ENCODE measurements at regions of chr19 and their contacts with region 1.

Region 1: DNA sequence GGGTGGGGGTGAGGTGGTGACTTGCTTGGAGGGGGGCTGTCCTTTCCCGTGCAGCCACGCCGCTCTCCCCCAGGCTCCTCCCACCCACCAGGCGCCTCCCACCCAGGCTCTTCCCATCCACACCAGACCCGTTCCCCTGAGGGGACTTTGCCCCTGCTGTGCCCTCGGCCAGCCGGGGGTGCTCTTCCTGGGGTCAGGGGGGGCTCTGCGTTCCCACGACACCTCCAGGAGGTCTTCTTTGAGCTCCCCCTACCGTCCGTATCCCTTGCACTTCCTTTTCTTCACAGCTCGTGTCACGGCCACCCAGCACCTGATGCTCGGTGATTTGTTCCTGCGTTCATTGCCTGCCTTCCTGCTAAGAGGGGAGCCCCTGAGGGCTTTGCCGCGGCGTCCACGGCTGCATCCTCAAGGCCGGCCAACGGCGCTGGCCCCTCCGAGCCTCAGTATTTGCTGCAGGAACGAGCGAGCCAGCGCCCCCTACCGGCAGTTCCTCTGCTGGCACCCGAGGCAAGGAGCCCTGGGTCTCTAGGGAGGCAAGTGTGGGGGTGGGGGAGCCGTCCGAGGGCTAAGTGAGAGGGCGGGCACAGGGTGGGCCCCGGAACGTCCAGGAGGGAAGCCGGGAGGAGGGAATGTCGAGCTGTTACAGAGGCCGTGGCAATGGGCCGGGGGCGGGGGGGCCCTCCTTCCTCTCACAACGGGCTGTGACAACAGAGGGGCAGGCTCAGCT is 11.8 kb downstream of the LRRC4B start:
- DNase-seq: peak; percentile 91
- ATAC-seq: peak; percentile 89
- H3K4me3 Mint-ChIP-seq: peak overlapping the region; percentile 61
- H3K27ac Mint-ChIP-seq: no peak overlapping the region
- H3K4me1 Mint-ChIP-seq: peaks cover 7% of the 10 kb centered on the region
- H3K27me3 Mint-ChIP-seq: peaks cover 51% of the 10 kb centered on the region
- CTCF ChIP-seq: peak; percentile 97

Region 2: GRCh38 chr19:50531118-50531612 is 25.3 kb before region 1 on chr19:
- CTCF ChIA-PET with region 1: interaction called, 60 read pairs
- POLR2A ChIA-PET with region 1: no interaction called
- intact Hi-C with region 1: no loop called
- DNase-seq: no peak
- ATAC-seq: no peak
- H3K4me3 Mint-ChIP-seq: no peak overlapping the region
- H3K27ac Mint-ChIP-seq: no peak overlapping the region
- H3K4me1 Mint-ChIP-seq: no peaks in the 10 kb centered on the region
- H3K27me3 Mint-ChIP-seq: peaks cover 19% of the 10 kb centered on the region
- CTCF ChIP-seq: no peak

Region 3: GRCh38 chr19:50568321-50569075 is 12.1 kb after region 1 on chr19 and contains the start of gene LRRC4B:
- CTCF ChIA-PET with region 1: interaction called, 13 read pairs
- POLR2A ChIA-PET with region 1: no interaction called
- intact Hi-C with region 1: no loop called
- DNase-seq: no peak
- ATAC-seq: no peak
- H3K4me3 Mint-ChIP-seq: no peak within 1 kb of the TSS
- H3K27ac Mint-ChIP-seq: no peak within 1 kb of the TSS
- H3K4me1 Mint-ChIP-seq: peaks cover 16% of the 10 kb centered on the region
- H3K27me3 Mint-ChIP-seq: peaks cover 40% of the 10 kb centered on the region
- CTCF ChIP-seq: no peak
- total RNA-seq, gene LRRC4B: not detected